GM12878 (cell line): ENCODE measurements at regions of chr1 and their contacts with region 1.

Region 1: DNA sequence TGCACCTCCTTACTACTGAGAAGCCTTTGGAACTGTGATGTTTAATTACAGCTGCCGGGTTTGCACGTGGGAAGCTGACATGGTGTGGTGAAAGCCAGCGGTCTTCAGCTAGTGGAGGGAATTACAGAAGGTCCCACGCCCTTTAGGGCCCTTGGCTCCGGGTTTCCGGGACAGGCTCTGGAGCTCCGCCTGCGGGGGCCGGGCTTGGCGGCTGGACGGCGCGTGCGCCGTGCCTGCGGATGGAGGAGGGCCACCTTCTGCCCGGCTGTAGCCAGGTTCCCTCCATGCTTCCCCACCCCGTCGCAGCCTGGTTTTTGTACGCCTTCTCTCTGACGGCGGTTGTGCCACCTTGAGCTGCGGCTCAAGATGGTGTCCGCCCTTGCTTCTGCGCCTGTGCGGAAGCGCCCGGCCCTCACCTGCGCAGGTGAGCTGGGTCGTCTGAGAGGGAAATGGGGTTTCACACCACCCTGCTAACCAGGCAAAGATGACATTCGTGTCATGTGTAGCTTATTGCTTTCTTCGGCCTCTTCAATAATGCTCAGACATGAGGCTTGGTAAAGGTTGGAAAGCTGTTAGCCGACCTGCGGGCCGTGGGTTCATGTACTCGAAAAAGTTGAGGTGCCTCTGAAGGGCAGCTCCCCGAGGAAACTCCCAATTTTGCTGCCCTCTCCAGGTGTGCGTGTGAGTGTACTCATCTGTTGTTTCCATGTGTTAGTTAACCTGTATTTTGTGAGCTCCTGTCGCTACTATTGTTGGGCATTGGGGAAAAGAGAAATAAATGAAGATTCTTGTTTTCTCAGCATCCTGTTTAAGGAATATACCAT is 36.6 kb upstream of the OPRD1 start:
- DNase-seq: no peak
- ATAC-seq: peak; percentile 98
- H3K4me3 ChIP-seq: peak overlapping the region; percentile 7; the same call in 1 of the 2 replicates
- H3K27ac ChIP-seq: no peak overlapping the region
- H3K4me1 ChIP-seq: no peaks in the 10 kb centered on the region
- H3K27me3 ChIP-seq: no peaks in the 10 kb centered on the region
- CTCF ChIP-seq: no peak
- EP300 ChIP-seq: no peak
- POLR2A ChIP-seq: peak; percentile 67
- RAD21 ChIP-seq: no peak

Region 2: DNA sequence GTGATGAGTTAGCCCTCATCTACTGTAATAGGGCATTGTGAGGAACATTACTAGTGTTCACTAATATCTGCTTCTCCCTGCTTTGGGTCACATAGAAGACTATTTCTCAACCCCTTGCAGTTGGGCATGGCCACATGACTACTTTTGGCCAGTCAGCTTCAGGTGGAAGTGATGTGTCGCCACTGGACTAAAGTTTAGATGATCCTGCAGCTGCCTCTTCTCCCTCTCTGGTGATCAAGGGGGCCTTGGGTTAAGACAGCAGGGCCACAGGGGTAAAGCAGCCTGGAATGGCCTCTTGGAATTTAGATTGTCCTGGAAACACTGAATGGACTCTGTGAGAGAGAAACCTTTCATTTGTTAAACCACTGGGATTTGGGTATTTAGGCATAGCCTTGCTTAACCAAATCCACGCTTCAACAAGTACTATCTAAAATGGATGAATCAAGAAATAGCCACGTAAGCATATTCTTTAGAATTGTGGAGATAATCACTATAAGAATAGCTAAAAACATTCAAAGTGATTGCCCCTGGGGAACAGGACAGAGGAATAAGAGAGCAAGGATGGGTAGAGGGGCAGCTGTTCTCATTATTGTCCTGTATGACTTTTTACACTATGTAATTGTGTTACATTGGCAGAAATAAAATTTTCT is 77.9 kb after region 1 on chr1:
- CTCF ChIA-PET with region 1: no interaction called
- POLR2A ChIA-PET with region 1: no interaction called
- RAD21 ChIA-PET with region 1: no interaction called
- SMC1A ChIA-PET with region 1: no interaction called
- in situ Hi-C with region 1: no loop called
- intact Hi-C with region 1: no loop called
- DNase-seq: no peak
- ATAC-seq: no peak
- H3K4me3 ChIP-seq: no peak overlapping the region
- H3K27ac ChIP-seq: no peak overlapping the region
- H3K4me1 ChIP-seq: no peaks in the 10 kb centered on the region
- H3K27me3 ChIP-seq: no peaks in the 10 kb centered on the region
- CTCF ChIP-seq: no peak
- EP300 ChIP-seq: no peak
- POLR2A ChIP-seq: no peak
- RAD21 ChIP-seq: no peak

Region 3: GRCh38 chr1:29197585-29197924 is 422.2 kb after region 1 on chr1:
- CTCF ChIA-PET with region 1: interaction called, 8 read pairs
- POLR2A ChIA-PET with region 1: no interaction called
- RAD21 ChIA-PET with region 1: no interaction called
- SMC1A ChIA-PET with region 1: interaction called, 6 read pairs
- in situ Hi-C with region 1: loop called (anchors 5 kb)
- intact Hi-C with region 1: loop called (anchors 10 kb)
- DNase-seq: no peak
- ATAC-seq: peak; percentile 97
- H3K4me3 ChIP-seq: no peak overlapping the region
- H3K27ac ChIP-seq: no peak overlapping the region
- H3K4me1 ChIP-seq: peaks cover 2% of the 10 kb centered on the region; the same call in 1 of the 2 replicates
- H3K27me3 ChIP-seq: no peaks in the 10 kb centered on the region
- CTCF ChIP-seq: peak; percentile 32 to 55 (median 47); a peak in 5 of 6 replicates
- EP300 ChIP-seq: no peak
- POLR2A ChIP-seq: no peak
- RAD21 ChIP-seq: peak; percentile 41